Activated naive CD4-positive, alpha-beta T cell treated with anti-CD3 and anti-CD28 coated beads for 36 hours (primary cell): ENCODE measurements at regions of chr2 and their contacts with region 1.

Region 1: GRCh38 chr2:106160786-106161261 is 33.3 kb downstream of the UXS1 start:
- DNase-seq: peak; percentile 67
- H3K4me3 Mint-ChIP-seq: peak overlapping the region; percentile 79
- H3K27ac Mint-ChIP-seq: peak overlapping the region; percentile 95
- H3K4me1 Mint-ChIP-seq: peaks cover 87% of the 10 kb centered on the region
- H3K27me3 Mint-ChIP-seq: no peaks in the 10 kb centered on the region

Region 2: DNA sequence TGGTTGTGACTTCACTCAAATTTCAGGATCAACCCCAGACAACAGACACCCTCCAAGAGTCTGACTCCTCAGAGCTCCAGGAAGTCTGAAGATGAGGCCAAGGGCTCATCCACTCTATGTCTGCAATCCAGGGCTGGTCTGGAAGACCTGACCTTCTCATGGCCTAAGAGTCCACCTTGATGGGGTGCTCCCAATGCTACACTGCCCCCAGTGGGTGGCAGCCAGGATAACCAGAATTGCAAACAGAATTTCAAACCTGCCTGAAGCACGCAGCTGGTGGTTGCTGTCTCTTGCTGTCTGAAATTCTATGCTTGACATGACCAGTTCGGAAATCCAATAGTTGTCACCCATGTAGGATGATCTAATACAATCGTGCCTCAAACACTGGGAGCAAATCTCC is 62.7 kb before region 1 on chr2:
- CTCF ChIA-PET with region 1: no interaction called
- intact Hi-C with region 1: loop called (anchors 2 kb)
- DNase-seq: peak; percentile 53
- H3K4me3 Mint-ChIP-seq: no peak overlapping the region
- H3K27ac Mint-ChIP-seq: no peak overlapping the region
- H3K4me1 Mint-ChIP-seq: peaks cover 40% of the 10 kb centered on the region
- H3K27me3 Mint-ChIP-seq: no peaks in the 10 kb centered on the region

Region 3: DNA sequence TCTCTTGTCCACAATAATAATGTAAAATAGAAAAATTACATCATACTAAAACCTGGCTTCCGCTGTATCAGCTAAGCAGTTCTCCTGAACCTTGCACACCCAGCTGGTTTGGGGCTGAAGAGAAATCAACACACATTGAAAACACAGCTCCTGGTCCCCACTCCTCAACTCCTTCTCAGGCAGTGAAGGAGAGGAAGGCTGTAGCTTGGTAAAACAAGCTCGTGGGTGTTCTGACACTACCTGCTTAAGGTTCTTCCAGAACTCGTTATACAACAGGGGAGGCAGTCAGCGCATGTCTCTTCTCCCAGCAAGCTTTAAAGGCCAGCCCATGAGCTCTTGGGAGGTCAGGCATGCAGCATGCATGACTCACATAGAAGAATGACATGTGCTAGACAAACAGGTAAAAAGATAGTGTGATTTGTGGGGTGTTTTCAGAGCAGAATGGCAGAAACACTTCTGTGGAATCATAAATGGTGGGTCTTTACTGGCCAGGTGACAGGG is 35.9 kb before region 1 on chr2:
- CTCF ChIA-PET with region 1: no interaction called
- intact Hi-C with region 1: loop called (anchors 5 kb)
- DNase-seq: no peak
- H3K4me3 Mint-ChIP-seq: no peak overlapping the region
- H3K27ac Mint-ChIP-seq: no peak overlapping the region
- H3K4me1 Mint-ChIP-seq: peaks cover 26% of the 10 kb centered on the region
- H3K27me3 Mint-ChIP-seq: no peaks in the 10 kb centered on the region

Region 4: DNA sequence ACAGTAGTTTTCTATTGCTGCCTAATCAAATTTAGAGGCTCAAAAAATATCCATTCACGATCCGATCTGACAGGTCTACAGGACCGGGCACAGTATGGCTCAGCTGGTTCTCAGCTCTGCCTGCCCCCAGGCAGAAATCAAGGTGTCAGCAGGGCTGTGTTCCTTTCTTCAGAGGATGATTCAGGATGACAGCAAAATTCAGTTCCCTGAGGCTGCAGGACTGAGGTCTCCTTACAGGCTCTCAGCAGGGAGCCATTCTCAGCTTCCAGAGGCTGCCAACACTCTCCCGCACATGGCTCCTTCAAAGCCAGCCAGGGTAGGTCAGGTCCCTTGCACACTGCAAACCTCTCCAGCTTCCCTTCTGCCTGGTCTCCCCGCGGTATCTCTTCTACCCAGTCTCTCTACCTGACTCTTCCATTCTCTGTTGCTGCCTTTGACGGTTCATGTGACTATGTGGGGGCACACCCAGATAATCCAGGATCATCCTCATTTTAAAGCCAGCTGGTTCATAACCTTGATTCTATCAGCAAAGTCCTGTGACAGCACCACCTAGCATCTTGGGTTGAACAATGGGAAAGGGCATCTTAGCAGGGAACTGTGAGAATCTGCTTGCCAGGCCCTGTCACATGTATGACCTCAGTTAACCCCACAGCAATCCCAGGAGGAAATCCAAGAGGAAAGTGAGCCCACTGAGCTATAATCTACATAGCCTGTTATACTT is 17.2 kb before region 1 on chr2:
- CTCF ChIA-PET with region 1: interaction called, 8 read pairs
- intact Hi-C with region 1: loop called (anchors 1 kb)
- DNase-seq: no peak
- H3K4me3 Mint-ChIP-seq: no peak overlapping the region
- H3K27ac Mint-ChIP-seq: peak overlapping the region; percentile 66
- H3K4me1 Mint-ChIP-seq: peaks cover 77% of the 10 kb centered on the region
- H3K27me3 Mint-ChIP-seq: no peaks in the 10 kb centered on the region